ENCODE measurements at regions of chr16 and their contacts with region 1.

Region 1: GRCh38 chr16:21646721-21647561 is 5.5 kb downstream of the IGSF6 start:
- DNase-seq: peak; percentile 71
- H3K4me3 Mint-ChIP-seq: peak overlapping the region; percentile 57
- H3K27ac Mint-ChIP-seq: peak overlapping the region; percentile 81
- H3K4me1 Mint-ChIP-seq: peaks cover 36% of the 10 kb centered on the region
- H3K27me3 Mint-ChIP-seq: no peaks in the 10 kb centered on the region

Region 2: GRCh38 chr16:21501909-21502667 is 144.9 kb before region 1 on chr16:
- intact Hi-C with region 1: loop called (anchors 10 kb)
- DNase-seq: peak; percentile 95
- H3K4me3 Mint-ChIP-seq: peak overlapping the region; percentile 85
- H3K27ac Mint-ChIP-seq: peak overlapping the region; percentile 87
- H3K4me1 Mint-ChIP-seq: peaks cover 27% of the 10 kb centered on the region
- H3K27me3 Mint-ChIP-seq: no peaks in the 10 kb centered on the region

Region 3: GRCh38 chr16:21584817-21585216 is 62.1 kb before region 1 on chr16:
- intact Hi-C with region 1: loop called (anchors 1 kb)
- DNase-seq: no peak
- H3K4me3 Mint-ChIP-seq: no peak overlapping the region
- H3K27ac Mint-ChIP-seq: no peak overlapping the region
- H3K4me1 Mint-ChIP-seq: no peaks in the 10 kb centered on the region
- H3K27me3 Mint-ChIP-seq: peaks cover 10% of the 10 kb centered on the region

Region 4: DNA sequence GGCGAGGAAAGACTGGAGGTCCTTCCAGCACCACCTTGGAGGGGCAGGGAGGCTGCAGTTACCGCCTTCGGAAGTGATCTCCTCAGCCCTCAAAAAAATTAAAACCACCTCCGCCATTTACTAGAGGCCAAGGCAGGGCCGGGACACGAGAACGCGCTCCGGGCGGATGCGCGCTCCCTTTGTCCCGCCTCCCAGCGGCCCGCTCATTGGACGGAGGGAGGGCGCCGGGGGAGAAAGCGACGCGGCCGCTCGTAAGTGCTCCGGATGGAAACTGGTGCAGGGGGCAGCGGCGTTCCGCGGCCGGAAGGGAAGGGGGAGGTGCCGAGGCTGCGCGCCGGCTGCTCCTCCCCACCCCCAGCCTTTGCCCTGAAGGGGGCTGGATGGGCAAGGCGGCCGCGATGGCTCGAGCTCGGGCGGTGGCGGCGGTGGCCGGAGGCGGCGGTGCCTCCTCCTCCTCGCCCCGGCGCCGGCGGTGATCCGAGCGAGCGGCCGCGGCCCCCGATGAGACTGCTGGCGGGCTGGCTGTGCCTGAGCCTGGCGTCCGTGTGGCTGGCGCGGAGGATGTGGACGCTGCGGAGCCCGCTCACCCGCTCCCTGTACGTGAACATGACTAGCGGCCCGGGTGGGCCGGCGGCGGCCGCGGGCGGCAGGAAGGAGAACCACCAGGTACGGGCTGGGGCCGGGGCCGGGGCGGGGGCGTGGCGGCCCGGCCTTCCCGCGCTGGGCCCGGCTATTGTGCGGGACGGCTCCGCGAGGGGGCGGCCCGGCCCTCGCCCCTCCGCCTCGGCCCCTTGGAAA is 47.5 kb before region 1 on chr16 and contains the start of gene METTL9:
- intact Hi-C with region 1: loop called (anchors 1 kb)
- DNase-seq: peak; percentile 95
- H3K4me3 Mint-ChIP-seq: peak within 1 kb of the TSS; percentile 96
- H3K27ac Mint-ChIP-seq: peak within 1 kb of the TSS; percentile 87
- H3K4me1 Mint-ChIP-seq: peaks cover 55% of the 10 kb centered on the region
- H3K27me3 Mint-ChIP-seq: peaks cover 3% of the 10 kb centered on the region
- total RNA-seq, gene METTL9: 58.8 and 64.9 TPM in 2 replicates

Region 5: GRCh38 chr16:21656795-21657768 is 10.1 kb after region 1 on chr16:
- intact Hi-C with region 1: loop called (anchors 1 kb)
- DNase-seq: peak; percentile 32
- H3K4me3 Mint-ChIP-seq: no peak overlapping the region
- H3K27ac Mint-ChIP-seq: no peak overlapping the region
- H3K4me1 Mint-ChIP-seq: peaks cover 33% of the 10 kb centered on the region
- H3K27me3 Mint-ChIP-seq: peaks cover 4% of the 10 kb centered on the region